ENCODE measurements at regions of chr21 and their contacts with region 1.

Region 1: GRCh38 chr21:29372063-29372802 is 73.5 kb downstream of the BACH1 start:
- DNase-seq: no peak
- ATAC-seq: peak; percentile 93
- H3K4me3 ChIP-seq: no peak overlapping the region
- H3K27ac ChIP-seq: no peak overlapping the region
- H3K4me1 ChIP-seq: no peaks in the 10 kb centered on the region
- H3K27me3 ChIP-seq: no peaks in the 10 kb centered on the region
- CTCF ChIP-seq: peak; percentile 64

Region 2: GRCh38 chr21:29091032-29091431 is 281.2 kb before region 1 on chr21:
- CTCF ChIA-PET with region 1: interaction called, 3 read pairs
- POLR2A ChIA-PET with region 1: no interaction called
- in situ Hi-C with region 1: no loop called
- intact Hi-C with region 1: loop called (anchors 2 kb)
- DNase-seq: no peak
- ATAC-seq: no peak
- H3K4me3 ChIP-seq: no peak overlapping the region
- H3K27ac ChIP-seq: no peak overlapping the region
- H3K4me1 ChIP-seq: no peaks in the 10 kb centered on the region
- H3K27me3 ChIP-seq: no peaks in the 10 kb centered on the region
- CTCF ChIP-seq: no peak

Region 3: DNA sequence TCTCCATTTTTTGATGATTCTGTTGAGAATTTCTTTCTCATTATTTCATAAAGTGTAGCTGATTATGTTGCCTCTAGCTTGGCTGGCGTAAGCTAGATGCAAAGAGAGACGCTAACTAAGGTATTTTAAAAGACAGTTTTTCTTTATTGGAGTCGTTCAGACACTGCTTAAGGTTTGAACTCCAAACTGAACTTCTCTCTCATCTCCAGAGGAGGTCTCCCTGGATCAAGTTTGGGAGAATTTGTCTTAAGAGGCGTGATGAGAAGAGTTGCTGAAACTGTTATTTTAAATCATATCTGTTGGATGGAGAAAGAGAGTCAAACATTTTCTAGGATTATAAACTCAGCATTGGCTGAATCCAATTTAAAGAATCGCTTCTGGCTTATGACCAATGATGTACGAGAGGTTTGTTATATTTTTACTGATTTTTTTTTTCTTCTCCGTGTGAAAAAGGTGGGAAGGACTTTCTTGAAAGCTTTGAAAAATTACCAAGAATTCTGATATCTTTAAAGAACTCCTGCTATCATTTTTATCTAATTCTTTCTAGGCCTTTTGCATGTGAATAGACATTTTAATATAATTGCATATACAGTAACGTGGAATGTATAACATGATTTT is 207.8 kb before region 1 on chr21:
- CTCF ChIA-PET with region 1: interaction called, 3 read pairs
- POLR2A ChIA-PET with region 1: no interaction called
- in situ Hi-C with region 1: no loop called
- intact Hi-C with region 1: loop called (anchors 5 kb)
- DNase-seq: no peak
- ATAC-seq: peak; percentile 74
- H3K4me3 ChIP-seq: no peak overlapping the region
- H3K27ac ChIP-seq: no peak overlapping the region
- H3K4me1 ChIP-seq: no peaks in the 10 kb centered on the region
- H3K27me3 ChIP-seq: no peaks in the 10 kb centered on the region
- CTCF ChIP-seq: peak; percentile 70; the same call in 1 of the 2 replicates

Region 4: GRCh38 chr21:29271927-29272333 is 100.3 kb before region 1 on chr21:
- CTCF ChIA-PET with region 1: no interaction called
- POLR2A ChIA-PET with region 1: no interaction called
- in situ Hi-C with region 1: no loop called
- intact Hi-C with region 1: no loop called
- DNase-seq: no peak
- ATAC-seq: no peak
- H3K4me3 ChIP-seq: no peak overlapping the region
- H3K27ac ChIP-seq: no peak overlapping the region
- H3K4me1 ChIP-seq: no peaks in the 10 kb centered on the region
- H3K27me3 ChIP-seq: no peaks in the 10 kb centered on the region
- CTCF ChIP-seq: no peak

Region 5: DNA sequence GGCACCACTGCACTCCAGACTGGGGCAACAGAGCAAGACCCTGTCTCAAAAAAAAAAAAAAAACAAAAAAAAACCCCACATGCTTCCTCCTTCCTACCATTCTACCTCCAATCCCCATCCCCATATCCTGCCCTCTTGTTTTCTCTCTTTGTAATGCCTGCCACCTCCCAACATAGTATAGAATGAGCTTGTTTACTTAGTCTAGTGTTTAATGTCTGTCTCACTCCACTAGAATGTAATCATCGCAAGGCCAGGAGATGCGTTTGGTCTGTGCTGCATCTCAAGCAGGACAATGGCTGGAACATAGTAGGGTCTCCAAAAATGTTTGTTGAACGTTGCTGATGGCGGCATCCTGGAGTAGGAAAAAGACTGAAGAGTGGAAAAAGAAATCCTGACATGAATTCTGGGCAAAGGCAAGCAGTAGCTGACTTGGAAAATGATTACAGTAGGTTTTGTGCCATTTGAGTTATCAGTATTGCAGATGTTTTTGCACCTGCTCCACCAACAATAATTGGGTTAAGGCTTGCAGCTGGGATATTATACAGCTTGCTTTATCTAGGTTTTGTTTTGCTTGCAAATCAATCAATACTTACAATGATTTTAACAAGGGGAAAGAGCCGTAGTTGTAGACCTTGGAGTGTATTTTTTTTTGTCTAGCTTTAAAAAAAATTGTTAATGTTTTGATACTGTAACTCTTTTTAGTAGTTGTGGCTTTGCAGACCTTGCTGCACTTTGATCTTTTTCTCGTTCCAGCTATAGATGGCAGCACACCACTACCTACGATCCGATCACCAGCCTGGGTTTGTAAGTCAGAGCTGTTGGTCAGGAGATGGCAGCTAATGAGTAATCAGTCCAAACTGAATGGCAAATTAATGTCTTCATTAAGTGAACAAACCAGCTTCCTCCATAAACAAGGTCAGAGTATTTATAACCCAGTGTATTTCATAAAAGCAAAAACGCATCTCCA is 11.2 kb before region 1 on chr21:
- CTCF ChIA-PET with region 1: interaction called, 10 read pairs
- POLR2A ChIA-PET with region 1: no interaction called
- in situ Hi-C with region 1: no loop called
- intact Hi-C with region 1: no loop called
- DNase-seq: no peak
- ATAC-seq: no peak
- H3K4me3 ChIP-seq: no peak overlapping the region
- H3K27ac ChIP-seq: no peak overlapping the region
- H3K4me1 ChIP-seq: no peaks in the 10 kb centered on the region
- H3K27me3 ChIP-seq: no peaks in the 10 kb centered on the region
- CTCF ChIP-seq: peak; percentile 46; the same call in 1 of the 2 replicates

Region 6: GRCh38 chr21:29487154-29487553 is 114.9 kb after region 1 on chr21:
- CTCF ChIA-PET with region 1: no interaction called
- POLR2A ChIA-PET with region 1: no interaction called
- in situ Hi-C with region 1: no loop called
- intact Hi-C with region 1: no loop called
- DNase-seq: no peak
- ATAC-seq: no peak
- H3K4me3 ChIP-seq: no peak overlapping the region
- H3K27ac ChIP-seq: no peak overlapping the region
- H3K4me1 ChIP-seq: no peaks in the 10 kb centered on the region
- H3K27me3 ChIP-seq: no peaks in the 10 kb centered on the region
- CTCF ChIP-seq: no peak